Endothelial cell of umbilical vein (primary cell): ENCODE measurements at regions of chr20 and their contacts with region 1.

Region 1: GRCh38 chr20:50029697-50030461 is 47.1 kb downstream of the SNAI1 start:
- DNase-seq: peak; percentile 93
- H3K4me3 ChIP-seq: peak overlapping the region in 1 of 3 experiments; percentile 2
- H3K27ac ChIP-seq: peak overlapping the region; percentile 99
- H3K4me1 ChIP-seq: peaks cover 57% of the 10 kb centered on the region
- H3K27me3 ChIP-seq: no peaks in the 10 kb centered on the region
- CTCF ChIP-seq: no peak
- POLR2A ChIP-seq: peak; percentile 66

Region 2: GRCh38 chr20:49562311-49563014 is 467.4 kb before region 1 on chr20:
- CTCF ChIA-PET with region 1: no interaction called
- POLR2A ChIA-PET with region 1: no interaction called
- dilution Hi-C with region 1: no loop called
- intact Hi-C with region 1: loop called (anchors 10 kb)
- DNase-seq: peak; percentile 96
- H3K4me3 ChIP-seq: no peak overlapping the region
- H3K27ac ChIP-seq: peak overlapping the region; percentile 79
- H3K4me1 ChIP-seq: peaks cover 47% of the 10 kb centered on the region
- H3K27me3 ChIP-seq: no peaks in the 10 kb centered on the region
- CTCF ChIP-seq: no peak
- POLR2A ChIP-seq: peak; percentile 26

Region 3: DNA sequence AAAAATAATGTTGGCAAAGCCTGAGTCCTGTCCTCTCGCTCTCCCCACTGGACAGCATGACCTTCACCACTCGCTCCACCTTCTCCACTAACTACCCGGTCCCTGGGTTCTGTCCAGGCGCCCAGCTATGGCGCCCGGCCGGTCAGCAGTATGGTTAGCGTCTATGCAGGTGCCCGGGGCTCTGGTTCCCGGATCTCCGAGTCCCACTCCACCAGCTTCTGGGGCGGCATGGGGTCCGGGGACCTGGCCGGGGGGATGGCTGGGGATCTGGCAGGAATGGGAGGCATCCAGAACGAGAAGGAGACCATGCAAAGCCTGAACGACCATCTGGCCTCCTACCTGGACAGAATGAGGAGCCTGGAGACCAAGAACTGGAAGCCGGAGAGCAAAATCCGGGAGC is 73.2 kb before region 1 on chr20:
- CTCF ChIA-PET with region 1: no interaction called
- POLR2A ChIA-PET with region 1: no interaction called
- dilution Hi-C with region 1: no loop called
- intact Hi-C with region 1: no loop called
- DNase-seq: no peak
- H3K4me3 ChIP-seq: no peak overlapping the region
- H3K27ac ChIP-seq: no peak overlapping the region
- H3K4me1 ChIP-seq: no peaks in the 10 kb centered on the region
- H3K27me3 ChIP-seq: no peaks in the 10 kb centered on the region
- CTCF ChIP-seq: no peak
- POLR2A ChIP-seq: no peak

Region 4: DNA sequence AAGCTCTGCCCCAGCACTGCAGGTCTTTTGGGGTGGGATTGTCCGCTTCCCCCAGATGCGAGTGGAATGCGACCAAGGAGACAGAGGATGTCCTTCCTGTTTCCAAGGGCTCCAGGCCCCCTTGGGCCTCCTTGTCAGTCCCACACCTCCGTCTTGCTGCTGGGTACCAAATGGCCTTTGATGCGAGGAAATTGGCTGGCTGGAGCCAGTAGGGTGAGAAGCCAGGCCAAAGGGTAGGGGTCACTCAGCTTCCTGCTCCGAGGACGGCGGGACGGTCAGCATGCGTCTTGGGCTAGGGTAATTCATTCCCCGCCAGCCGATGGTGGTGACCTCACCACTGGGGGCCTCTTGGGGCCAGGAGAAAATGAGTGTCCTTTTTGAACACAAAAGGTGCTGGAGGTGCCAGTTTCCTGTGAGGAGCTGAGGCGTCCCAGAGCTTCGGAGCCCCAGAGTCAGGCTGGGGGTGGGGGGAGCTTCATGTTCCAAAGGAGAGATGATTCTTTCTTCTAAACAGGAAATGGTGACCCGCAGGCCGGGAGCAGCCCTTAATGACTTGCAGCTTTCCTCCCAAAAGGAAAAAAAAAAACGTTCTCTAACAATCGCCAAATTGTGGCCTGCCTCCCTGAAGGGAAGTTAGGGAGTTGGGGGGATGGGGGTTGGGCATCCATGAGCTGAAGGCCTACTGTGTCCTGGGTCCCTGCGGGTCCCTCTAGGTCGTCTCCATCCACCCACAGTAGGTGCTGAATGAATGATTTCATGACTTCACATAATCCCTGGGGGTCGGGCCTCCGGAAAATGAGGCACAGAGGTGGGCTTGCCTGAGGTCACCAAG is 40.4 kb before region 1 on chr20:
- CTCF ChIA-PET with region 1: interaction called, 5 read pairs
- POLR2A ChIA-PET with region 1: interaction called, 13 read pairs
- dilution Hi-C with region 1: no loop called
- intact Hi-C with region 1: loop called (anchors 1 kb)
- DNase-seq: peak; percentile 71
- H3K4me3 ChIP-seq: no peak overlapping the region
- H3K27ac ChIP-seq: peak overlapping the region; percentile 94
- H3K4me1 ChIP-seq: peaks cover 59% of the 10 kb centered on the region
- H3K27me3 ChIP-seq: no peaks in the 10 kb centered on the region
- CTCF ChIP-seq: no peak
- POLR2A ChIP-seq: no peak

Region 5: DNA sequence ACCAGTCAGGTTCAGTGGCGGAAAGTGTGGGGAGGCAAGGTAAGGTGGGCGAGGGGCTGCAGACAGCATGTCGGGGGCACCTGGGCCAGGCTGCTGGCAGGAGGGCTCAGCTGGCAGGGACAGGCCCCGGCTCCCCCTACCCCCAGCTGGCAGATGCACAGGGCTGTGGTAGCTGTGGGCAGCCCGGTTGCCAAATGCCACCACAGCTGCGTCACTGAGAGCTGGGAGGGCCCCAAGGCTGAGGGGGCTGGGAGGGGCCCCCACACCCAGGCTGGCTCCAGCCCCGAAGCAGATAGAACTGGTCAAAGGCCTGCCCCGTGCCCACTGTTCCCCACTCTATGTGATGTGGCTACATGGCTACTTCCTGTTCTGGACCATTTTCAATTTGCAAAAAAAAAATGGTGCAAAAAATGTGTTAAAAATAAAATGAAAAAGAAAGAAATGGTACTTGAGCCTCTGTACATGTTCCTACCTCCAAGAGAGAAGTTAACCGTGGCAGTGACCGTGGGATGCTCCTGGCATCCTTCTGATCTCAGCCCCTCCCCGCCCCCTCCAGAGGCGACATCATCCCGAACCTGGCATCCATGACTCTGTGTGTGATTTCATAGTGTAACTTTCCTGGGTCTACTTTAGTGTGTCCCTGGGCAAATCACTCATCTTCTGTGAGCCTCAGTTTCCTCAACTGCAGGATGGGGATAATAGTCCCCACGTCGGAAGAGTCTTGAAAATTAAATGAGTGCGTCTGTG is 18.7 kb after region 1 on chr20:
- CTCF ChIA-PET with region 1: interaction called, 3 read pairs
- POLR2A ChIA-PET with region 1: interaction called, 13 read pairs
- dilution Hi-C with region 1: no loop called
- intact Hi-C with region 1: loop called (anchors 1 kb)
- DNase-seq: no peak
- H3K4me3 ChIP-seq: no peak overlapping the region
- H3K27ac ChIP-seq: peak overlapping the region; percentile 96
- H3K4me1 ChIP-seq: peaks cover 26% of the 10 kb centered on the region
- H3K27me3 ChIP-seq: no peaks in the 10 kb centered on the region
- CTCF ChIP-seq: no peak
- POLR2A ChIP-seq: no peak

Region 6: GRCh38 chr20:50208085-50208491 is 178.2 kb after region 1 on chr20:
- CTCF ChIA-PET with region 1: no interaction called
- POLR2A ChIA-PET with region 1: no interaction called
- dilution Hi-C with region 1: no loop called
- intact Hi-C with region 1: no loop called
- DNase-seq: no peak
- H3K4me3 ChIP-seq: no peak overlapping the region
- H3K27ac ChIP-seq: no peak overlapping the region
- H3K4me1 ChIP-seq: no peaks in the 10 kb centered on the region
- H3K27me3 ChIP-seq: peaks cover 4 to 7% of the 10 kb centered on the region in 2 experiments
- CTCF ChIP-seq: no peak
- POLR2A ChIP-seq: no peak

Region 7: GRCh38 chr20:50967586-50967985 is 937.7 kb after region 1 on chr20:
- CTCF ChIA-PET with region 1: no interaction called
- POLR2A ChIA-PET with region 1: no interaction called
- dilution Hi-C with region 1: no loop called
- intact Hi-C with region 1: no loop called
- DNase-seq: no peak
- H3K4me3 ChIP-seq: no peak overlapping the region
- H3K27ac ChIP-seq: no peak overlapping the region
- H3K4me1 ChIP-seq: no peaks in the 10 kb centered on the region
- H3K27me3 ChIP-seq: peaks cover 7 to 8% of the 10 kb centered on the region in 2 experiments
- CTCF ChIP-seq: no peak
- POLR2A ChIP-seq: no peak